ENCODE measurements at regions of chr1 and their contacts with region 1.

Region 1: GRCh38 chr1:235415008-235415904 is 48.0 kb downstream of the TBCE start:
- DNase-seq: peak; percentile 71
- CTCF ChIP-seq: peak; percentile 54

Region 2: DNA sequence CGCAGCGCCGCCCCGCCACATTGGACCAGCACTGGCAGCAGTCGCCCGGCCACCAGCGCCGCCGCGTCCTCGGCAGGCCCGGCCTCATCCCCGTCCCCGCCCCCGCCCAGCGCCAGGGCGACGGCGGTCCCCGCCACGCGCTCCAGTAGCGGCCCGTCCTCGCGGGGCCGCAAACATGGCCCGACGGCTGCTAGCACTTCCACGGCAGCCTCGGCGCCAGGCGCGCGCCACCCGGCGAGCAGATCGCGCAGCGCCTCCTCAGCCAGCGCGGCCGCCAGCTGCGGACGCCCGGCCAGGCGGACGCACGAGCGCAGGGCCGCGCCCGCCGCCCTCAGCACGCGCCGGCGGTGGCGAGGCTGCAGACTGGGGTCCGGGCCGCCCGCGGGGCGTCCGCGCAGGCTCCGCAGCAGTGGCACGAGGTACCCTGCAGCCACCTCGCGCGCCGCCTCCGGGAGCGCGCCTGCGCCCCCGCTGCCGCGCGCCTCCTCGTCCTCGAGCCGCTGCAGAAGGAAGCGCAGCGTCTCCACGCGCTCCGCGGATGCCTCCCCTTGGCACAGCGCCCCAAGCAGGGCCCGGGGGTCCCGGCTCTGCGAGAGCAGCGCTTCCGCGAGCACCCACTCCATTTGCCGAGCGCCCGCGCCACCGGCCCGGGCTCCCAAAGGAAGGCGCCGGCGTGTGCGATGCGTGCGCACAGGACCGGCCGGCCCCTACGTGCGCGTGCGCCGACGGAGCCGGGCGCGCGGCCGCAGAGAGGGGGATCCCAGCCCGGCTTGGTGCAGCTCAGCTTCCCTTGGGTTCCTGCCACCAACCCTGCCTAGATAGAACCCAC is 936.6 kb before region 1 on chr1 and contains the start of gene TARBP1:
- in situ Hi-C with region 1: loop called (anchors 25 kb)
- DNase-seq: peak; percentile 87
- CTCF ChIP-seq: peak; percentile 51

Region 3: GRCh38 chr1:235246022-235246991 is 168.9 kb before region 1 on chr1:
- in situ Hi-C with region 1: loop called (anchors 10 kb)
- DNase-seq: no peak
- CTCF ChIP-seq: no peak